ENCODE measurements at regions of chr19 and their contacts with region 1.

Region 1: GRCh38 chr19:48363810-48364563 is at the starts of genes SYNGR4 and TMEM143:
- DNase-seq: peak; percentile 98 to 99 (median 99)
- H3K4me3 ChIP-seq: peak within 1 kb of the TSS; percentile 93 to 94
- H3K4me3 Mint-ChIP-seq: peak within 1 kb of the TSS; percentile 87 to 96 (median 94)
- H3K27ac ChIP-seq: peak within 1 kb of the TSS; percentile 88
- H3K27ac Mint-ChIP-seq: peak within 1 kb of the TSS; percentile 87 to 98 (median 92)
- H3K4me1 ChIP-seq: peaks cover 17% of the 10 kb centered on the region
- H3K4me1 Mint-ChIP-seq: peaks cover 4 to 14% (median 5%) of the 10 kb centered on the region in 4 donors
- H3K27me3 ChIP-seq: no peaks in the 10 kb centered on the region
- H3K27me3 Mint-ChIP-seq: no peaks in the 10 kb centered on the region
- total RNA-seq, gene SYNGR4: not detected
- total RNA-seq, gene TMEM143: 27.6 to 31.8 TPM

Region 2: DNA sequence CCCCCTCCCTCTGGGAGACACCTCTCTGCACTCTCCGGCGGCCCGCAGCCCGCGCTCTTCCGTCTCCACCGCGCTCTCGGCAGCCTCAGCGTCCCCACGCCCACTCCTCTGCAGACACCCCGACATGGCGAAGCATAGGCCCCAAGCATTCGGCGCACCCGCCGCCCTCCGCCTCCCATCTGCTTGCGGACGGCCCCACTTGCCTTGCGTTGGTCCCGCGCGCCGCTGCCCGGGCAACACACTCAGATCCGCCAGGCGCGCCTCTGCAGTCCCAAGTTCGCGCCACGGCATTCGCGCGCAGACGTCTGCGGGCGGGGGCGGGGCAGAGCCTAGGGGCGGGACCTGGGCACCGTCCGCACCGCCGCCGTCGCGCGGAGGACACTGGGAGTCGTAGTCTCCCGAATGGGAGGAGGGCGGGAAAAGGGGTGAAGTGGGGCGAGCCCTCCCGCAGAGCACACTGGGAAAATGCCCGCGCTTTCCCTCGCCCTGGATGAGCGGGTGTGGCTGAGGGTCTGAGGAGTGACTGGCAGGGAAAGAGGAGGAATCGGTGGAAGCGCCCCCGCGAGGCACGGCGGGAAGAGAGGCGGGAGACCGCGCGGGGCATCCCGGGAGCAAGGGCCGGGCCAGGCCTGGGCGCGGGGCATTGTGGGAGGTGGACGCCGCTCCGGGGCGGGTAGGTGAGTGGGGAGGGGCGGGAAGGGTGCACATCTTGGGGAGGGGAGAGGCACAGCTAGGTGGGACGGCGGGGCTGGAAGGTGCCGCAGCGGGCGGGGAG is 193.8 kb before region 1 on chr19 and contains the starts of genes LIG1 and ZSWIM9:
- CTCF ChIA-PET with region 1: no interaction called
- POLR2A ChIA-PET with region 1: no interaction called
- intact Hi-C with region 1: loop called (anchors 1 kb)
- DNase-seq: peak; percentile 90 to 97 (median 93)
- H3K4me3 ChIP-seq: peak within 1 kb of the TSS; percentile 65 to 97
- H3K4me3 Mint-ChIP-seq: peak within 1 kb of the TSS; percentile 96 to 99 (median 97)
- H3K27ac ChIP-seq: peak within 1 kb of the TSS; percentile 86
- H3K27ac Mint-ChIP-seq: peak within 1 kb of the TSS; percentile 93 to 99 (median 98)
- H3K4me1 ChIP-seq: peaks cover 24% of the 10 kb centered on the region
- H3K4me1 Mint-ChIP-seq: peaks cover 18 to 32% (median 23%) of the 10 kb centered on the region in 4 donors
- H3K27me3 ChIP-seq: no peaks in the 10 kb centered on the region
- H3K27me3 Mint-ChIP-seq: no peaks in the 10 kb centered on the region
- total RNA-seq, gene LIG1: 118 to 124 TPM
- total RNA-seq, gene ZSWIM9: 10.5 to 11.8 TPM

Region 3: DNA sequence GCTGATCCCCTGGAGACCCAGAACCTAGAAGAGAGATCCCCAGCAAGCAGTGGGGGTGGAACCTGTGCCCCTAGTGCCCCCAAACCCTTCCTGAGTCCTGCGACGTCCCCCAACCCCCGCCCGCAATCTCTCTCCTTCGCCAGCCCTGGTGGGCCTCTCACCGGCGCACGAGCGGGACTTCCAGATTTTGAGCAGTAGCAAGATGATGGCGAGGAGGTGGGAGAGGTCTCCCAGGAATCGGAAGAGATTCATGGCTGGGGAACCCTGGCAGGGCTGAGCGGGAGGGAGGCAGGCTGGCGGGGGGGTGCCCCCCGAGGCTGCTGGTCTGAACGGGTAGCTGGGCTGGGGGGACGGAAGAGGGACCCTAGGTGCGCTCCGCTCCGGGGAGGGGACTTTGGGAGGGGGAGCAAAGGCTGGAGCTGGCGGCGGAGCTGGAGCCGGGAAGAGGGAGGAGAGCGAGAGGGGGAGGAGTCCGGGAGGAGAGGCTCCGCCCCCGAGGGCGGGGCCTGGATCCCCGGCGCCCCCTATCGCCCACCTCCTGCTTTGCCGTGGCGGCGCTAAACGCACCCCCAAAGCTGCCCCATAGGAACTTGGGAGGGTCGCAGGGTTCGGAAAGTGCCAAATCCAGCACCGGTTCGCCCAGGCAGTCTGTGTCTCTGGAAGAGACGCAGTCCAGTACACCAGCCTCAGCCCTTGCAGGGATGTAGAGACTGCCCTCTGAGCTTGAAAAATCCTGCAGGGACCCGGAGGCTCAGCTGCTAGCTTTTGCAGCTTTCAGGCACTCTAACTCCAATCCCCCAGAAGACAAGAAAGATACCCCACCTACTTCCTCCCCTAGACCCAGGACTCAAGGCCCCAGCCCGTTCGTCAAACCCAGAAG is 27.4 kb after region 1 on chr19 and contains the start of gene KDELR1:
- CTCF ChIA-PET with region 1: interaction called, 21 read pairs
- POLR2A ChIA-PET with region 1: interaction called, 46 read pairs
- intact Hi-C with region 1: loop called (anchors 2 kb)
- DNase-seq: peak; percentile 59 to 79 (median 66)
- H3K4me3 ChIP-seq: peak within 1 kb of the TSS; percentile 63 to 89
- H3K4me3 Mint-ChIP-seq: peak within 1 kb of the TSS; percentile 91 to 95 (median 94)
- H3K27ac ChIP-seq: peak within 1 kb of the TSS; percentile 93
- H3K27ac Mint-ChIP-seq: peak within 1 kb of the TSS; percentile 89 to 98 (median 95)
- H3K4me1 ChIP-seq: peaks cover 41% of the 10 kb centered on the region
- H3K4me1 Mint-ChIP-seq: peaks cover 15 to 49% (median 33%) of the 10 kb centered on the region in 4 donors
- H3K27me3 ChIP-seq: peaks cover 19% of the 10 kb centered on the region
- H3K27me3 Mint-ChIP-seq: peaks cover 6 to 19% of the 10 kb centered on the region in 2 donors
- total RNA-seq, gene KDELR1: 58.8 to 63.2 TPM

Region 4: GRCh38 chr19:48445606-48446481 is 81.9 kb after region 1 on chr19 and contains the start of gene GRWD1:
- CTCF ChIA-PET with region 1: no interaction called
- POLR2A ChIA-PET with region 1: interaction called, 5 read pairs
- intact Hi-C with region 1: loop called (anchors 1 kb)
- DNase-seq: peak; percentile 91 to 99 (median 96)
- H3K4me3 ChIP-seq: peak within 1 kb of the TSS; percentile 75 to 85
- H3K4me3 Mint-ChIP-seq: peak within 1 kb of the TSS; percentile 86 to 94 (median 90)
- H3K27ac ChIP-seq: peak within 1 kb of the TSS; percentile 83
- H3K27ac Mint-ChIP-seq: peak within 1 kb of the TSS; percentile 88 to 98 (median 94)
- H3K4me1 ChIP-seq: peaks cover 25% of the 10 kb centered on the region
- H3K4me1 Mint-ChIP-seq: peaks cover 19 to 48% (median 32%) of the 10 kb centered on the region in 4 donors
- H3K27me3 ChIP-seq: no peaks in the 10 kb centered on the region
- H3K27me3 Mint-ChIP-seq: peaks cover 10 to 17% of the 10 kb centered on the region in 2 donors
- total RNA-seq, gene GRWD1: 36.2 to 39.0 TPM

Region 5: GRCh38 chr19:48513289-48514122 is 149.5 kb after region 1 on chr19:
- CTCF ChIA-PET with region 1: interaction called, 3 read pairs
- POLR2A ChIA-PET with region 1: interaction called, 7 read pairs
- intact Hi-C with region 1: loop called (anchors 1 kb)
- DNase-seq: peak; percentile 70 to 88 (median 73)
- H3K4me3 ChIP-seq: peak overlapping the region; percentile 65 to 89
- H3K4me3 Mint-ChIP-seq: no peak overlapping the region
- H3K27ac ChIP-seq: peak overlapping the region; percentile 59
- H3K27ac Mint-ChIP-seq: peak overlapping the region in 3 of 7 donors; percentile 68 to 96 (median 91)
- H3K4me1 ChIP-seq: peaks cover 27% of the 10 kb centered on the region
- H3K4me1 Mint-ChIP-seq: peaks cover 6 to 16% (median 11%) of the 10 kb centered on the region in 4 donors
- H3K27me3 ChIP-seq: no peaks in the 10 kb centered on the region
- H3K27me3 Mint-ChIP-seq: no peaks in the 10 kb centered on the region

Region 6: DNA sequence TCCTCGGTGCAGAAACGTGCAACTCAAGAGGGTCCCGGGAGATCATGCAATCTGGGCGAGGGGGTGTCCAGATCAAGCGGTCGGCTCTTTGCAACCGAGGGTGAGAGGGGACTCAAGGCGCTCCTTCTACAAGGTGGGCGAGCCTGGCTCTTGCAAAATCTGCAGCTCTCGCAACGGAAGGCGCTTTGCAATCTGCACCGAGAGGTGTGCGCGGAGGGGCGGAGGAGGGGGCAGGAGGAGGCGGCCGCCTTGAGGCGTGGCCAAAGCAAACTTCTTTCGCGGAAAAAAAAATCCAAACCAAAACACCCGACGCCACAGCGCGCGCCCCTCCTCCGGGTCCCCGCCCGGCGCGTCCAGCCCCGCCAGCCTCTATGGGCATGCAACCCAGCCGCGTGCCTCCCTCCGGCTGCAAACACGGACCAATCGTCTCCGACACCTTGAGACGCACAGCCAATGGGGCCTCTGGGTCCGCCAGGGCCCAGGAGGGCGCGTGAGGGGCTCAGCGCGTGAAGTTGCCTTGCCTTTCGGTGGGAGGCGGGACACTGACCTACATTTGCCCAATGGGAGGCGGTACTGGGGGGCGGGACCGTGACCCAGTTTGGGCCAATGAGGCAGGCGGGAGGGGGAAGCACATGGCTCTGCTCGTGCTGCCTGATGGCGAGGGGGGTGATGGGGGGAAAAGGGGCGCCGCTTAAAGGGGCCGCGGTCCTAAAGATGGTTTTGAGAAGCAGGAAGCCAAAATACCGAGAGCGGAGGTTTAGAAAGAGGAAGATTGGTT is 273.4 kb after region 1 on chr19 and contains the start of gene DBP:
- CTCF ChIA-PET with region 1: no interaction called
- POLR2A ChIA-PET with region 1: interaction called, 4 read pairs
- intact Hi-C with region 1: loop called (anchors 1 kb)
- DNase-seq: peak in 4 of 5 donors; percentile 99 to 100 (median 100)
- H3K4me3 ChIP-seq: peak within 1 kb of the TSS; percentile 52 to 88
- H3K4me3 Mint-ChIP-seq: peak within 1 kb of the TSS; percentile 89 to 100 (median 99)
- H3K27ac ChIP-seq: peak within 1 kb of the TSS; percentile 88
- H3K27ac Mint-ChIP-seq: peak within 1 kb of the TSS; percentile 93 to 100 (median 99)
- H3K4me1 ChIP-seq: peaks cover 46% of the 10 kb centered on the region
- H3K4me1 Mint-ChIP-seq: peaks cover 20 to 55% (median 40%) of the 10 kb centered on the region in 4 donors
- H3K27me3 ChIP-seq: no peaks in the 10 kb centered on the region
- H3K27me3 Mint-ChIP-seq: no peaks in the 10 kb centered on the region
- total RNA-seq, gene DBP: 62.6 to 69.5 TPM